ENCODE measurements at regions of chr3 and their contacts with region 1.

Region 1: DNA sequence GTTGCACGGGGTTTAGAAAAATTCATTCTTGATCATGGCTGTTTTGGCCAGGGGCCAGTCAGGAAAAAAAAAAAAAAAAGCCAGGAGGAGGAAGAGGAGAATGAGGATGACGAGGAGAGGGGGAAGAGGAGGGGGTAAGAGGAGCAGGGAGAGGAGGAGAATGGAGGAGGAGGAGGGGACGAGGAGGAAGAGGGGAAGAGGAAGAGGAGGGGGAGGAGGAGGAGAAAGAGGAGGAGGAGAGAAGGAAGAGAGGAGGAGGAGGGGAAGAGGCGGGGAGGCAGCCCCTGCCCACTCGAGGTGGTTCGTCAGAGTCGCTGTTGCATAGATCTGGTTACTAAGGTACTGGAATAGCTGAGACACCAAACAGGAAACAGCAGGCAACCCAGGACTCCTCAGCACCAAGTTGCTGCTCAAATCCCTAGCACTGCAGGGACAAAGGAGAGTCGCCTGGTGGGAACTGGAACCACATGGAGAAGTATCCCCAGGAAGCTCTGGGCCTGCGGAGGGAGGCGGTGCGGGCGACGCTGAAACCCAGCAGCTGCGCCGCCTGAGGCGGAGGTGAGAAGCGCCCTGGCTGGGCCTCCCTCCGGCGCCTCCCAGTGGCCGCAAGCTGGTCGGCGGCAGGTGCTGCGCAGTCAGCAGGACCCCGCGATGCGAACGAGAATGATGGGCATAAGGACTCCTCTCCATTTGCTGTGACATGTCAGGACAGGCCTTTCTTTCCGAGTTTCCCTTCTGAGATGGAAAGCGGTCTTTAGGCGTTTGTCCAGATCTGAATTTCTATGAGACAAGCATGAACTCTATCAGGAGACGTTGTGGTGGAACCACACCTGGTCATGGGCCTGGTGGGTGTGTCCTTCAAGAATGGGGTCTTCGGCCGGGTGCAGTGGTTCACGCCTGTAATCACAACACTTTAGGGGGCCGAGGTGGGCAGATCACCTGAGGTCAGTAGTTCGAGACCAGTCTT is 17.5 kb downstream of the FAM240A start:
- DNase-seq: peak; percentile 73
- ATAC-seq: peak; percentile 98
- H3K4me3 Mint-ChIP-seq: peak overlapping the region; percentile 65
- H3K27ac Mint-ChIP-seq: peak overlapping the region; percentile 56
- H3K4me1 Mint-ChIP-seq: peaks cover 17% of the 10 kb centered on the region
- H3K27me3 Mint-ChIP-seq: peaks cover 2% of the 10 kb centered on the region
- CTCF ChIP-seq: peak; percentile 74

Region 2: DNA sequence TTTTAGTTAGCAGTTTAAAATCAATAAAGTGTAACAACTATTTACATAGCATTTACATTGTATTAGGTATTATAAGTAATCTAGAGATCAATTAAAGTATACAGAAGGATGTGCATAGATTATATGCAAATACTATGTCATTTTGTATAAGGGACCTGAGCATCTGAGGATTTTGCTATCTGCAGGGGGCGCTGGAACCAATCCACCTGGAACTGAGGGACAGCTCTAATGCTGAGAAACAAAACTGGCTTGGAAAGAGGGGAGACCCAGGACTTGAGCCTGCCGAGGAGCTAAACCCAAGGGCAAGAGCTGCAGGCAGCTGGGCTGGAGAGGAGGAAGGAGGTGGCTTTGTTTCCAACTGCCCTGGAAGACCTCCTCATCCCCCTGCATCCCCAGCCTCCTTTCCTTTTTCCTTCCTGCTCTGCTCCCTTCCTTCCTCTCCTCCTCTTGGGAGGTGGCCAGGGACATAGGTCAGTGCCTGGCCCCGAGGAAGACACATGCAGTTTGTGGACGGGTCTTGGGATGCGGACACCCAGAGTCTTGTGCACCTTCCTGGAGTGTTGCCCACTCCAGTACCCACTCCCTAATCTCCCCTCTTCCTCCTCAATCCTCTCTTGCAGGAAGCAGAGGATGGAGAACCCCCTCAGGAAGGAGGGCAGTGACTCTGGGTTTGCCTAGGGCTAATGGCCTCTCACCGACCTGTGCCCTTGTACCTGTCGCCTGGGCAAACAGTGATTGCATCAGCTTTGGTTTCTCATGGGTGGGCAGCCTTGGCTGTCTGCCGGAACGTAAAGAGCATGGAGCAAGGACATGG is 132.9 kb before region 1 on chr3:
- CTCF ChIA-PET with region 1: interaction called, 11 read pairs
- POLR2A ChIA-PET with region 1: no interaction called
- intact Hi-C with region 1: no loop called
- DNase-seq: no peak
- ATAC-seq: peak; percentile 34
- H3K4me3 Mint-ChIP-seq: no peak overlapping the region
- H3K27ac Mint-ChIP-seq: no peak overlapping the region
- H3K4me1 Mint-ChIP-seq: peaks cover 28% of the 10 kb centered on the region
- H3K27me3 Mint-ChIP-seq: no peaks in the 10 kb centered on the region
- CTCF ChIP-seq: no peak

Region 3: GRCh38 chr3:46558184-46559043 is 71.4 kb before region 1 on chr3:
- CTCF ChIA-PET with region 1: interaction called, 19 read pairs
- POLR2A ChIA-PET with region 1: interaction called, 8 read pairs
- intact Hi-C with region 1: loop called (anchors 1 kb)
- DNase-seq: peak; percentile 50
- ATAC-seq: peak; percentile 98
- H3K4me3 Mint-ChIP-seq: peak overlapping the region; percentile 61
- H3K27ac Mint-ChIP-seq: no peak overlapping the region
- H3K4me1 Mint-ChIP-seq: peaks cover 20% of the 10 kb centered on the region
- H3K27me3 Mint-ChIP-seq: peaks cover 1% of the 10 kb centered on the region
- CTCF ChIP-seq: no peak

Region 4: GRCh38 chr3:46607603-46608028 is 22.2 kb before region 1 on chr3:
- CTCF ChIA-PET with region 1: interaction called, 4 read pairs
- POLR2A ChIA-PET with region 1: interaction called, 18 read pairs
- intact Hi-C with region 1: no loop called
- DNase-seq: no peak
- ATAC-seq: no peak
- H3K4me3 Mint-ChIP-seq: no peak overlapping the region
- H3K27ac Mint-ChIP-seq: no peak overlapping the region
- H3K4me1 Mint-ChIP-seq: no peaks in the 10 kb centered on the region
- H3K27me3 Mint-ChIP-seq: peaks cover 3% of the 10 kb centered on the region
- CTCF ChIP-seq: no peak

Region 5: DNA sequence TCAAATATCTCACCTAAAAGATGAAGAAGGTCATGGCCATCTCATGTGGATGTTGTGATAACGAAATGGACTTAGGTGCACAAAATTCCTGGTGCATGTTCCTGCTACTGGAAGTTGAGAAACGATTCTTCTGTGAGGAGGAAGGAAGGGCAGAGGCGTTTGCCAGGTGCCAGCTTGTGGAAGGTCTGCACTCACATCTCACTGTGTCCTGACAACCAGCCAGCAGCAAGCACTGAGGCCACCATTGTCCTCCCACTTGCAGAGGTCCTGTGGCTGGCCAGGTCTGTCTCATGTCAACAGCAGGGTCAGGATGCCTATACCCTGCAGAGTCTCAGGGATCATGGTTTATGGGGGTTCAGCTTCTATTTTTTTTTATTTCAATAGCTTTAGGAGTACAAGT is 13.9 kb before region 1 on chr3:
- CTCF ChIA-PET with region 1: interaction called, 9 read pairs
- POLR2A ChIA-PET with region 1: interaction called, 13 read pairs
- intact Hi-C with region 1: no loop called
- DNase-seq: no peak
- ATAC-seq: no peak
- H3K4me3 Mint-ChIP-seq: no peak overlapping the region
- H3K27ac Mint-ChIP-seq: no peak overlapping the region
- H3K4me1 Mint-ChIP-seq: no peaks in the 10 kb centered on the region
- H3K27me3 Mint-ChIP-seq: peaks cover 30% of the 10 kb centered on the region
- CTCF ChIP-seq: no peak